CD4-positive, alpha-beta T cell (primary cell): ENCODE measurements at regions of chr1 and their contacts with region 1.

Region 1: DNA sequence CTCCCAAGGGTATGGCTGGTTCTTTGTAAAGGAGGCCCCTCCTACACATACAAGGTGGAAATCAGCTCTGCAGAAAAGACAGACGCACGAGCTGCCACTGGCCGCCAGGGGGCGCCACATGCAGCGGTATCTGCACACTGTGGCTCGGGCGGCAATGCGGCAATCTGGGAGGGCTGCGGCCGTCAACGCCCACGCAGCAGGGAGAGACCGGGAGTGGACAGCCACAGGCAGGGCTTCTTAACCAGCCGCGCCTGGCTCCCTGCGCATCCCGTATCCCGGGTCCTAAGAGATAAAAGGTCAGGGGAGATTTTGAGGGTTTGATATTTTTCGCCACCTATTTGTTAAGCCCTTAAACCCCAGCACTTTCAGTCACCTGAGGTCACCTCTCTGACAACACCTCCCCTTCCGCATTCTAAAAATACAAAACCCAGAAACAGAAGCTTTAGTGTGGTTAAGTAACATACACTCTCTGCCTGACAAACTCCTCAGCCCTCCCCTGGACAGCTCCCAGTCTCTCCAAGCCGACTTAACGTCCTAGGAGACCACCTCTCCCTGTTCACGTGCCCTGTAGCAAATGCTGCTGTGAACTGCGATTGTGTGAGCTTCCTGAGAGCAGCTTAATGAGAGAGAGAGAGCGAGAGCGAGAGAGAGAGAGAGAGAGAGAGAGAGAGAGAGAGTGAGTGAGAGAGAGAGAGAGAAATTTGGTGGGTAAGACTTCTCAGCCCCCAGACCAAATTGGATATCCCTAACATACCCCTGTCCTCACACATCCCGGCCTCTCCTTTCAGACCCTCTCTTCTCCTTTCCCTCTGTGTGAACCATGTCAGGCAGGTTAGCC is 13.5 kb upstream of the KCNA2 start:
- DNase-seq: peak; percentile 82 to 95 (median 89)
- ATAC-seq: peak; percentile 84
- H3K4me3 ChIP-seq: peak overlapping the region; percentile 69
- H3K4me3 Mint-ChIP-seq: peak overlapping the region; percentile 86
- H3K27ac ChIP-seq: peak overlapping the region; percentile 46 to 69
- H3K27ac Mint-ChIP-seq: peak overlapping the region; percentile 87
- H3K4me1 ChIP-seq: peaks cover 34% of the 10 kb centered on the region
- H3K4me1 Mint-ChIP-seq: peaks cover 46% of the 10 kb centered on the region
- H3K27me3 ChIP-seq: no peaks in the 10 kb centered on the region
- H3K27me3 Mint-ChIP-seq: no peaks in the 10 kb centered on the region
- CTCF ChIP-seq: peak; percentile 96

Region 2: DNA sequence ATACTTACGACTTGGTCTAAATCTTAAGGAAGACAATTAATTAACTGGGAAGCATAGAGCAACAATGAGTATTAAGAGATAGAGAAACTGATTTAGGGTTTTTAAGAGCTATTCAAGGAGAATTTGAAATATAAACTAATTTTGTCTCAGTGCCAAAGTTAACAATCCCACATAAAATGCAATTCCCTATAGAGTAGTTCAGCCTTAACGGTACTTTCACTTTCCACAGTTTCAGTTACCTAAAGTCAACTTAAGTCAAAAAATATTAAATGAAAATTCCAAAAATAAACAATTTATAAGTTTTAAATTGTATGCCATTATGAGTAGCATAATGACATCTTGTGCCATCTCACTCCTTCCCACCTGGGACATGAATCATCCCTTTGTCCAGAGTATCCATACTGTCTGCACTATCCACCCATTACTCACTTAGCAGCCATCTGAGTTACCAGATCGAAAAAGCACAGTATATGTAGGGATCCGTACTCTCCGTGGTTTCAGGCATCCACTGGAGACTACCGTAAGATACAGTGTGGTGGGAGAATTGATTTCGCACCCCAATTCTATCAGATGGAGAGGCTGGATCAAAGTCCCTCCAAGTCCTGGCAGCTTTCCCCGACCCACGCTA is 1410.7 kb before region 1 on chr1:
- CTCF ChIA-PET with region 1: no interaction called
- POLR2A ChIA-PET with region 1: no interaction called
- intact Hi-C with region 1: no loop called
- DNase-seq: no peak
- ATAC-seq: no peak
- H3K4me3 ChIP-seq: no peak overlapping the region
- H3K4me3 Mint-ChIP-seq: no peak overlapping the region
- H3K27ac ChIP-seq: no peak overlapping the region
- H3K27ac Mint-ChIP-seq: no peak overlapping the region
- H3K4me1 ChIP-seq: peaks cover 7% of the 10 kb centered on the region
- H3K4me1 Mint-ChIP-seq: peaks cover 3% of the 10 kb centered on the region
- H3K27me3 ChIP-seq: no peaks in the 10 kb centered on the region
- H3K27me3 Mint-ChIP-seq: no peaks in the 10 kb centered on the region
- CTCF ChIP-seq: no peak

Region 3: GRCh38 chr1:110209715-110210603 is 409.7 kb before region 1 on chr1 and contains the start of gene KCNC4:
- CTCF ChIA-PET with region 1: no interaction called
- POLR2A ChIA-PET with region 1: no interaction called
- intact Hi-C with region 1: loop called in 1 of 2 experiments (anchors 5 kb)
- DNase-seq: peak; percentile 86 to 98 (median 92)
- ATAC-seq: peak; percentile 85
- H3K4me3 ChIP-seq: peak within 1 kb of the TSS; percentile 70
- H3K4me3 Mint-ChIP-seq: peak within 1 kb of the TSS; percentile 94
- H3K27ac ChIP-seq: peak within 1 kb of the TSS; percentile 84 to 86
- H3K27ac Mint-ChIP-seq: peak within 1 kb of the TSS; percentile 94
- H3K4me1 ChIP-seq: peaks cover 50% of the 10 kb centered on the region
- H3K4me1 Mint-ChIP-seq: peaks cover 66% of the 10 kb centered on the region
- H3K27me3 ChIP-seq: no peaks in the 10 kb centered on the region
- H3K27me3 Mint-ChIP-seq: no peaks in the 10 kb centered on the region
- CTCF ChIP-seq: no peak
- total RNA-seq, gene KCNC4: 16.5 to 17.7 TPM

Region 4: GRCh38 chr1:110554871-110555801 is 64.5 kb before region 1 on chr1:
- CTCF ChIA-PET with region 1: interaction called, 8 read pairs
- POLR2A ChIA-PET with region 1: interaction called, 7 read pairs
- intact Hi-C with region 1: loop called (anchors 1 kb)
- DNase-seq: peak; percentile 27 to 77 (median 46)
- ATAC-seq: peak; percentile 94
- H3K4me3 ChIP-seq: no peak overlapping the region
- H3K4me3 Mint-ChIP-seq: no peak overlapping the region
- H3K27ac ChIP-seq: no peak overlapping the region
- H3K27ac Mint-ChIP-seq: no peak overlapping the region
- H3K4me1 ChIP-seq: peaks cover 11% of the 10 kb centered on the region
- H3K4me1 Mint-ChIP-seq: no peaks in the 10 kb centered on the region
- H3K27me3 ChIP-seq: peaks cover 34 to 62% of the 10 kb centered on the region in 2 experiments
- H3K27me3 Mint-ChIP-seq: peaks cover 72% of the 10 kb centered on the region
- CTCF ChIP-seq: peak; percentile 77

Region 5: GRCh38 chr1:110639724-110640386 is 20.2 kb after region 1 on chr1:
- CTCF ChIA-PET with region 1: interaction called, 20 read pairs
- POLR2A ChIA-PET with region 1: interaction called, 18 read pairs
- intact Hi-C with region 1: no loop called
- DNase-seq: peak in 2 of 14 experiments; percentile 57 to 68
- ATAC-seq: no peak
- H3K4me3 ChIP-seq: no peak overlapping the region
- H3K4me3 Mint-ChIP-seq: peak overlapping the region; percentile 17
- H3K27ac ChIP-seq: peak overlapping the region in 1 of 2 donors; percentile 32
- H3K27ac Mint-ChIP-seq: peak overlapping the region; percentile 88
- H3K4me1 ChIP-seq: peaks cover 95% of the 10 kb centered on the region
- H3K4me1 Mint-ChIP-seq: peaks cover 92% of the 10 kb centered on the region
- H3K27me3 ChIP-seq: no peaks in the 10 kb centered on the region
- H3K27me3 Mint-ChIP-seq: no peaks in the 10 kb centered on the region
- CTCF ChIP-seq: no peak

Region 6: DNA sequence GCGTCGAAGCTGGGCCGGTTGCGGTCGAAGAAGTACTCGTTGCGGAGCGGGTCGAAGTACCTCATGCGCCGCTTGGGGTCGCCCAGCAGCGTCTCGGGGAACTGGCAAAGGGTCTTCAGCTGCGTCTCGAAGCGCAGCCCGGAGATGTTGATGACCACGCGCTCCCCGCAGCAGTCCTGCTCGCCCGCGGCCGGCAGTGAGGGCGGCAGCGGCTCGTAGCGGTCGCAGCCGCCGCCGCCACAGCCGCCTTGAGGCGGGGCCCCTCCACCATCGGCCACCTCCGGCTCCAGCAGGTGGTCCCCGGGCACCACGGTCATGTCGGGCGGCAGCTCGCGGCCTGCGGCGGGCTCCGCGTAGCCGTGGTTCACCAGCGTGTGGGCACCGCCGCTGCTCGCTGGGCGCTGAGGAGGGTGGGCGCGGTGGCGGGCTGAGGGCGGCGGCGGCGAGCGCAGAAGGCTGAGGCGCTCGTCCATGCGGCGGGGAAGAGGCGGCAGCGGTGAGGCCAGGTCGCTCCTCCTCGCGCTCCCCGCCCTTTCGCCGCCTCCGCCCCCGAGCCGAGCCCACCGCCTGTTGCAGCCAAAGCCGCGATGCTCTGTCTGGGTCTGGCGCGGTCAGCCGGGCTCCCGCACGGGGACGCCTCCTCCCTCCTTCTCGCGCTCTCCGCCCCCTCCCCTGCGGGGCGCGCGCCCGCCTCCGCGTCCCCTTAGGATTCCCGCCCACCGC is 54.9 kb after region 1 on chr1 and contains the start of gene KCNA3:
- CTCF ChIA-PET with region 1: interaction called, 25 read pairs
- POLR2A ChIA-PET with region 1: interaction called, 73 read pairs
- intact Hi-C with region 1: loop called in 1 of 2 experiments (anchors 2 kb)
- DNase-seq: peak; percentile 45 to 86 (median 65)
- ATAC-seq: peak; percentile 25
- H3K4me3 ChIP-seq: peak within 1 kb of the TSS; percentile 99
- H3K4me3 Mint-ChIP-seq: peak within 1 kb of the TSS; percentile 90
- H3K27ac ChIP-seq: peak within 1 kb of the TSS; percentile 93 to 95
- H3K27ac Mint-ChIP-seq: peak within 1 kb of the TSS; percentile 73
- H3K4me1 ChIP-seq: peaks cover 16% of the 10 kb centered on the region
- H3K4me1 Mint-ChIP-seq: peaks cover 59% of the 10 kb centered on the region
- H3K27me3 ChIP-seq: no peaks in the 10 kb centered on the region
- H3K27me3 Mint-ChIP-seq: no peaks in the 10 kb centered on the region
- CTCF ChIP-seq: peak; percentile 49
- total RNA-seq, gene KCNA3: 112 to 118 TPM

Region 7: DNA sequence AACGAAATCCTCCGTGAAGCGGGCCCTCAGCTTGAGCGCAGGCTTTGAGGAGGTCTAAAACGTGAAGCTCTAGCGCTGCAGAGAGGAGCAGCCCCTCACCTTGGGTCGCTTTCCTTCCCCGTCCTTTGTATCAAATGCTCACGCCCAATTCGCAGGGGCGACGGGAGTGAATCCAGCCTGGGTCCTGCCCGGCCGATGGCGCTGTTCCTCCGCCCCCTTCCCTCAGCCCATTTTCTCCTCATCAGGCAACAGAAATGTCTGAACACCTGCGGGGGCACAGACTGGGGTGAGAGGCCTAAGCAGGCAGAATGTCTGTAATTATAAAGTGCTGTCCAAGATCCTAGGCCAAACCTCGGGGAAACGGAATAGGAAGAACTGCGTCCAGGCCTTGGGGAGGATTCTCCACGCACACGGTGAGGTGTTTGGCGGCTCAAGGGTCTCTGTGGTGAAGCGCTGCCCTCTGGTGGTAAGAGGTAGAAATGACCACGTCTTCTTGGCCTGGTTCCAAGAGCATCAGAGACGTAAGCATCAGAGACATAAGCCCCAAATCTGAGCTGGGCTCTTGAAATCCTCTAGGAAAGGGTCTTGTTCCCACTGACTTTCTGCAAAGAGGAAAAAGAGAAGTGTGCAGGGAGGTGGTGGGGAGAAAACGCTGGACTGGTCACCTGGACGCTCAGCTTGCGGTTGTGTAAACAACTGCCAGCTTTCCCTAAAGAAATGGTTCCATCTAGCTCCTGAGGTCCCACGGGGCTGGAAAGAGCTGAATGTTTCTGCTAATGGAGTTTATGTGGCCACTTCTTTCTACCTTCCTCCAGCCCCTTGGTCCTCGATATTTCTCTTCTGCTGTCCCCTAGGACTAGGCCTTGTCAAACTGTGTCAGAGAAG is 161.2 kb after region 1 on chr1:
- CTCF ChIA-PET with region 1: interaction called, 36 read pairs
- POLR2A ChIA-PET with region 1: interaction called, 23 read pairs
- intact Hi-C with region 1: loop called (anchors 1 kb)
- DNase-seq: peak; percentile 55 to 92 (median 70)
- ATAC-seq: peak; percentile 75
- H3K4me3 ChIP-seq: no peak overlapping the region
- H3K4me3 Mint-ChIP-seq: no peak overlapping the region
- H3K27ac ChIP-seq: no peak overlapping the region
- H3K27ac Mint-ChIP-seq: no peak overlapping the region
- H3K4me1 ChIP-seq: peaks cover 41% of the 10 kb centered on the region
- H3K4me1 Mint-ChIP-seq: peaks cover 56% of the 10 kb centered on the region
- H3K27me3 ChIP-seq: no peaks in the 10 kb centered on the region
- H3K27me3 Mint-ChIP-seq: no peaks in the 10 kb centered on the region
- CTCF ChIP-seq: peak; percentile 70

Region 8: GRCh38 chr1:110990536-110990935 is 370.9 kb after region 1 on chr1:
- CTCF ChIA-PET with region 1: no interaction called
- POLR2A ChIA-PET with region 1: interaction called, 3 read pairs
- intact Hi-C with region 1: loop called in 1 of 2 experiments (anchors 5 kb)
- DNase-seq: no peak
- ATAC-seq: no peak
- H3K4me3 ChIP-seq: no peak overlapping the region
- H3K4me3 Mint-ChIP-seq: no peak overlapping the region
- H3K27ac ChIP-seq: no peak overlapping the region
- H3K27ac Mint-ChIP-seq: no peak overlapping the region
- H3K4me1 ChIP-seq: no peaks in the 10 kb centered on the region
- H3K4me1 Mint-ChIP-seq: peaks cover 5% of the 10 kb centered on the region
- H3K27me3 ChIP-seq: no peaks in the 10 kb centered on the region
- H3K27me3 Mint-ChIP-seq: peaks cover 4% of the 10 kb centered on the region
- CTCF ChIP-seq: no peak